ENCODE measurements at regions of chr15 and their contacts with region 1.

Region 1: GRCh38 chr15:65054333-65055200 is 9.4 kb downstream of the SLC51B start:
- DNase-seq: peak; percentile 87
- H3K4me3 ChIP-seq: no peak overlapping the region
- H3K27ac ChIP-seq: peak overlapping the region in 3 of 8 donors; percentile 3 to 14 (median 9)
- H3K4me1 ChIP-seq: peaks cover 8 to 21% (median 10%) of the 10 kb centered on the region in 6 donors
- H3K27me3 ChIP-seq: no peaks in the 10 kb centered on the region
- CTCF ChIP-seq: peak; percentile 60 to 93 (median 86)
- POLR2A ChIP-seq: no peak

Region 2: DNA sequence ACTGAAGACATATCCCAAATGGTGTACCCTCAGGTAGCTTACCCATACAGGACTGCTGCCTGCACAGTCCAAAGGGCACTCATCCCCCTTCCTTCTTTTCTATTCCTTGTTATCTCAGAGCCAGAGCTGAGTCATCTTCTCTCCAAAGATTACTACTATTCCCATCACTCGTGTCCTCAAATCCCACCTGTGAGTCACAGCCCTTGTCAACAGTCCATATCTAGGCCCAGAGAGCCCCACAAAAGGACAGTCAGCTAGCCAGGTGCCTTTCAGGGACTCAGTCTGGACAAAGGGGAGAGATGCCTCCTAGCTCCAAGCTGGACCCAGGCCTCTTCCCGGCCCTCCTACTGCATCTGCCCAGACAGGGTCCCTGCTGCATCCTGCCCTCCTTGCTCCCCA is 221.2 kb after region 1 on chr15:
- intact Hi-C with region 1: loop called (anchors 10 kb)
- DNase-seq: no peak
- H3K4me3 ChIP-seq: no peak overlapping the region
- H3K27ac ChIP-seq: no peak overlapping the region
- H3K4me1 ChIP-seq: peaks cover 0 to 20% (median 2%) of the 10 kb centered on the region in 6 donors
- H3K27me3 ChIP-seq: no peaks in the 10 kb centered on the region
- CTCF ChIP-seq: no peak
- POLR2A ChIP-seq: no peak

Region 3: DNA sequence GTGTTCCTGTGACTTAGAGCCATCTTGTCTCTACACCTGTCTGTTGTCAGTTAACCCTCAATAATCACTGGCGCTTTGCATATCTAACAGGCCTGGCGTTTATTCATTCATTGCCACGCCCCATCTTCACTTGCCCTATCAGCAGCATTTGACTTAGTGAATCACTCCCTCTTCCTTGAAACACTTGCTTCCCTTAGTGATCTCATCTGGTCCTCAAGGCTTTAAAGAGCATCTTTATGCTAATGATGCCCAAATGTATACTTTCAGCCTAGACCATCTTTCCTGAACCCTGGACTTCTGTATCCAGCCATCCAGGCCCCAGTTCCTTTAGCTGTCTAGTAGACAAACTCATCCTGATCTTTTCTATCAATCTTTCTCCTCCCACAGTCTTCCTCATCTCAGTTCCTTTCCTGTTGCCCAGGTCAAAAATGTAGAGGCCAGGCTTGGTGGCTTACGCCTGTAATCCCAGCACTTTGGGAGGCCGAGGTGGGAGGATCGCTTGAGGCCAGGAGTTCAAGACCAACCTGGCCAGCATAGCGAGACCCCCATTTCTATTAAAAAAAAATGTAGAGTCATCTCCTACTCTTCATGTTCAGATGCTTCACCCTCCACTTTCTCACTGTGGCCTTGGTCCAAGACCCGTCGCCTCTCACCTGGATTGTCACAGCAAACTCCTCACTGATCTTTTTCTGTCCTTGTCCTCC is 369.6 kb after region 1 on chr15:
- intact Hi-C with region 1: no loop called
- DNase-seq: no peak
- H3K4me3 ChIP-seq: no peak overlapping the region
- H3K27ac ChIP-seq: no peak overlapping the region
- H3K4me1 ChIP-seq: peaks cover 0 to 28% (median 21%) of the 10 kb centered on the region in 6 donors
- H3K27me3 ChIP-seq: peaks cover 0 to 48% (median 31%) of the 10 kb centered on the region in 7 donors
- CTCF ChIP-seq: no peak
- POLR2A ChIP-seq: no peak